Spleen (tissue), 13 donors: ENCODE measurements at regions of chr16 and their contacts with region 1.

Region 1: DNA sequence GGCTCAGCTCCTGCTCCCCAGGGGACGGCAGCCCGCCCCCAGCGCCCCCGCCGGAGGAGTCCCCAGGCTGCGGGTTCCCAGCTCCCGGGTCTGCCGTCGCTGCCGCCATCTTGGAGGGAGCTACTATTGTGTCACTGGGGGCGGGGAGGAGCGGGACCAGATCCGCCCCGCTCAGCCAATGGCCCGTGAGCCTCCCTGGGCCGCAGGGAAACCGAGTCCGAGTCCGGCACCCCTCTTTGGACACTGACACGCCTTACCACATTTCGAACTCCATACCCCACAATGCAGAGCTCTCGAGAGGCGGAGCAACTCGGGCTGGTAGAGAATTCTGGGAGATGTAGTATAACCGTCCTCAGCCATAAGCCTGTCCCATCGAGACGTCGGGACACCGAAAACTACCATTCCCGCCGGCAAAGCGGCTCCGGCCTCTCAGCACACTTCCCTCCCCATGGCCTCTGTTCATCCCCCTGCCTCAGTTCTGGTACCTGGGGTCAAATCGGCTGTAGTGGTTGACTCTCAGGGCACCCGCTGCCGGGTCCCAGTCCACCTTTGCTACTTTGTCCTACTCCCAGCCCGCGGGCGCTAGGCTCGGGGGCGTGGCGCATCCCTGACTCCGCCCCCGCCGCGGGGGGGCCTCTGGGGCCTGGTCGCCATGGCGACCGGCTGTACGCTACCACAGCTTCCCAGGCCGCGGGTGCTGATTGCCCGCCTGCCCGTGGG is at the starts of genes RANBP10 and TSNAXIP1:
- DNase-seq: peak; percentile 99
- H3K4me3 ChIP-seq: peak within 1 kb of the TSS; percentile 73 to 98 (median 86)
- H3K27ac ChIP-seq: peak within 1 kb of the TSS; percentile 77 to 92 (median 82)
- H3K4me1 ChIP-seq: peaks cover 37 to 57% (median 53%) of the 10 kb centered on the region in 6 donors
- H3K27me3 ChIP-seq: no peaks in the 10 kb centered on the region
- CTCF ChIP-seq: peak in 2 of 11 experiments; percentile 4 to 23
- POLR2A ChIP-seq: peak in 1 of 3 donors; percentile 77
- total RNA-seq, gene RANBP10: 19.7 to 38.6 (median 25.9) TPM
- total RNA-seq, gene TSNAXIP1: 0.44 to 2.7 (median 0.80) TPM

Region 2: GRCh38 chr16:67521095-67521804 is 285.3 kb before region 1 on chr16:
- intact Hi-C with region 1: loop called (anchors 10 kb)
- DNase-seq: peak; percentile 98
- H3K4me3 ChIP-seq: peak overlapping the region; percentile 14 to 66 (median 42)
- H3K27ac ChIP-seq: peak overlapping the region; percentile 84 to 97 (median 94)
- H3K4me1 ChIP-seq: peaks cover 11 to 75% (median 47%) of the 10 kb centered on the region in 6 donors
- H3K27me3 ChIP-seq: no peaks in the 10 kb centered on the region
- CTCF ChIP-seq: peak; percentile 80 to 99 (median 90)
- POLR2A ChIP-seq: no peak

Region 3: GRCh38 chr16:67750466-67750865 is 56.1 kb before region 1 on chr16:
- intact Hi-C with region 1: loop called (anchors 10 kb)
- DNase-seq: no peak
- H3K4me3 ChIP-seq: no peak overlapping the region
- H3K27ac ChIP-seq: peak overlapping the region in 3 of 8 donors; percentile 14 to 38 (median 37)
- H3K4me1 ChIP-seq: peaks cover 0 to 30% (median 9%) of the 10 kb centered on the region in 6 donors
- H3K27me3 ChIP-seq: no peaks in the 10 kb centered on the region
- CTCF ChIP-seq: no peak
- POLR2A ChIP-seq: no peak

Region 4: DNA sequence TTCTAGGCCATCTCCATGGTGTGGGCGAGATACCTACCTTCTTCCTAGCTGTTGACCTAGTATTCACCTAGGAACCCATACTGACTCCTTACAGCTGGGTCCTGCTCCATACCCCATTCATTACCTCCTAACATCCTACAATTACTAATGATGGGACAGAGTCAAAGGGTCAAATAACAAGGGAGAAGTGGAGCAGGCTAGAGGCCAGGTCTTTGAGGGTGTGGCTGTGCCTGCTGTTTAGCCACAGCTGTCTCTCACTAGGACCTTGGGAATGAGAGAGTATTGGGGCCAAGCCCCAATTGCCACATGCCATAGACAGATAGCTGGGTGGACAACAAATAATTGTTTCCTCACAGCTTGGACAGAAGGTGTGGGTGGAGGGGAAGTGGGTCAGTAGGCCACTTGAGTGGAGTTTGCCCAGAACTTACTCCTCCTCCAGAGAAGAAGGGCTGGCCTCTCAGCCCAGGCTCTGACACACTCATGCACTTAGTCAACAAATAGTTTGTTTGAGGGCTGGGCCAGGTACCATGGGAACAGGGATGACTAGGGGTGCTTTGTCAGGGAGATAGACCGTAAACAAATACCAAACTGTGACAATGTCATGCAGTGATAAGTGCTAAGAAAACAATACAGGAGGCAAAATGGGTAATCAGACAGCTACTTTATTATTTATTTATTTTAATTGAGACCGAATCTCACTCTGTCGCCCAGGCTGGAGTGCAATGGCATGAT is 51.1 kb after region 1 on chr16:
- intact Hi-C with region 1: no loop called
- DNase-seq: no peak
- H3K4me3 ChIP-seq: no peak overlapping the region
- H3K27ac ChIP-seq: peak overlapping the region in 3 of 8 donors; percentile 7 to 45 (median 29)
- H3K4me1 ChIP-seq: peaks cover 0 to 48% (median 20%) of the 10 kb centered on the region in 6 donors
- H3K27me3 ChIP-seq: no peaks in the 10 kb centered on the region
- CTCF ChIP-seq: no peak
- POLR2A ChIP-seq: no peak

Region 5: GRCh38 chr16:67917852-67918236 is 111.3 kb after region 1 on chr16:
- intact Hi-C with region 1: no loop called
- DNase-seq: no peak
- H3K4me3 ChIP-seq: no peak overlapping the region
- H3K27ac ChIP-seq: no peak overlapping the region
- H3K4me1 ChIP-seq: peaks cover 0 to 27% (median 8%) of the 10 kb centered on the region in 6 donors
- H3K27me3 ChIP-seq: no peaks in the 10 kb centered on the region
- CTCF ChIP-seq: no peak
- POLR2A ChIP-seq: no peak